OCI-LY7 (cell line): ENCODE measurements at regions of chr6 and their contacts with region 1.

Region 1: DNA sequence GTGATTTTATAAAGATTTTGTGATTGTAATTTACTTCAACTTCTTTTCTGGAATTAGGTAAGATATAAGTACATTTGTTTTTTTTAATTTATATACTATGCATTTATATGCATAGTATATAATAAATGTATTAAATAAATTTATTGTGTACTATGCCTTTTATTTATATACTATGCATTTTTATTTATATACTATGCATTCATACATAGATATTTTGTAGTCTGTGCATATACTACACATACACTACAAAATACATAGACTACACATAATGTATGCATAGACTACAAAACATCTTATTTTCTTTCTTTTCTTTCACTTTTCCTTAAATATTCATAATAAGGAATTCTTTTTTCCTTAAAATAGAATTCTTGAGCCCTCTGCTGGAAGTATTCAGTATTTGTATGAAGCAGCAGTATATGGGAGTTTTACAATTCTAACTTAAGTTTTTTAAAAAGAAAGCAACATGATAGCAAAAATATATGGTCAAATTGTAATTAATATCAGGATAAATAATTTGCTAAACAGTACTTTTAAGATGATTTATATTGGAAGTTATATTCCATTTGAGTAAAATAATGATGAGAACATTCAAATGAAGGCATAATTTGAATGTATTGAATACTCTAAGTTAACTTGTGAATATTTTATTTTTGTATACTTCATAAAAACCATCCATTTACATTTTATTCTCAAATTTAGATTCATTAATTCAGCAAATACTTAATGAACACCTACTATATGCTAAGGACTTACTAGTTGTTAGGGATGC is 129.3 kb downstream of the KLHL32 start:
- DNase-seq: peak; percentile 23
- H3K4me3 ChIP-seq: no peak overlapping the region
- H3K27ac ChIP-seq: no peak overlapping the region
- H3K4me1 ChIP-seq: peaks cover 52% of the 10 kb centered on the region
- CTCF ChIP-seq: peak; percentile 95

Region 2: GRCh38 chr6:95577304-95578105 is 1476.3 kb before region 1 on chr6 and contains the start of gene MANEA:
- CTCF ChIA-PET with region 1: no interaction called
- POLR2A ChIA-PET with region 1: no interaction called
- intact Hi-C with region 1: loop called (anchors 2 kb)
- DNase-seq: peak; percentile 86
- H3K4me3 ChIP-seq: peak within 1 kb of the TSS; percentile 84
- H3K27ac ChIP-seq: peak within 1 kb of the TSS; percentile 93
- H3K4me1 ChIP-seq: peaks cover 31% of the 10 kb centered on the region
- CTCF ChIP-seq: no peak
- total RNA-seq, gene MANEA: 7.6 and 9.1 TPM in 2 replicates

Region 3: GRCh38 chr6:96837081-96837971 is 216.5 kb before region 1 on chr6 and contains the start of gene GPR63:
- CTCF ChIA-PET with region 1: no interaction called
- POLR2A ChIA-PET with region 1: no interaction called
- intact Hi-C with region 1: loop called (anchors 2 kb)
- DNase-seq: peak; percentile 64
- H3K4me3 ChIP-seq: peak within 1 kb of the TSS; percentile 72
- H3K27ac ChIP-seq: no peak within 1 kb of the TSS
- H3K4me1 ChIP-seq: peaks cover 6% of the 10 kb centered on the region
- CTCF ChIP-seq: no peak
- total RNA-seq, gene GPR63: 0.57 and 1.0 TPM in 2 replicates

Region 4: DNA sequence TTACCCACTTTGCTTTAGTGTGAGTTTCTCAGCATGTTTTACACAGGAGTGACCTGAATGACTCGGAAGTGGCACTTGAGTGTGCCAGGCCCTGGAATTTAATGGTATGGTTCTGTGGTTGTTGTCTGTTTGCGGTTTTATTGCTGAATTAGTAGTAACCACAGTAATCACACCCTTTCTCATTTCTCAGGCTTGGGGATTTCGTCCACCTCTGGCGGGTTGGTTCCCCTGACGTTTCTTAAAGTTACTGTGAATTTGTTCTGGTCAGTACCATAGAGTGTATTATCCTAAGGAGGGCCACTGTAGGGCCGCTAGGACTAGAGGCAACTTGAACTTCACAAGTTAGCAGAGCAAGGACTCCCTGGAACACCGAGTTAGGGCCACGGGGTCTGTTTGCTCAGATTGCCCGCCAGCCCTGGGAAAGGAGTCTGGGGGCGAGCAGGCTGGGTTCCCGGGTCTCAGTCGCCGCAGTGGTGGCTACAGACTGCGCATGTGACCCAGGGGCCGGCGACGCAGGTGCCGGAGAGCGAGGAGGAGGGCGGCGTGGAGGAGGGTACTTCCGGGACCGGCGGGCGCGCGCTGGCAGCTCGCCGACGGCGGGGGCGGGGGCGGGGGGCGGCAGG is 129.8 kb before region 1 on chr6:
- CTCF ChIA-PET with region 1: no interaction called
- POLR2A ChIA-PET with region 1: interaction called, 4 read pairs
- intact Hi-C with region 1: loop called (anchors 1 kb)
- DNase-seq: no peak
- H3K4me3 ChIP-seq: peak overlapping the region; percentile 93
- H3K27ac ChIP-seq: peak overlapping the region; percentile 58
- H3K4me1 ChIP-seq: peaks cover 20% of the 10 kb centered on the region
- CTCF ChIP-seq: no peak